ENCODE measurements at regions of chr11 and their contacts with region 1.

Region 1: DNA sequence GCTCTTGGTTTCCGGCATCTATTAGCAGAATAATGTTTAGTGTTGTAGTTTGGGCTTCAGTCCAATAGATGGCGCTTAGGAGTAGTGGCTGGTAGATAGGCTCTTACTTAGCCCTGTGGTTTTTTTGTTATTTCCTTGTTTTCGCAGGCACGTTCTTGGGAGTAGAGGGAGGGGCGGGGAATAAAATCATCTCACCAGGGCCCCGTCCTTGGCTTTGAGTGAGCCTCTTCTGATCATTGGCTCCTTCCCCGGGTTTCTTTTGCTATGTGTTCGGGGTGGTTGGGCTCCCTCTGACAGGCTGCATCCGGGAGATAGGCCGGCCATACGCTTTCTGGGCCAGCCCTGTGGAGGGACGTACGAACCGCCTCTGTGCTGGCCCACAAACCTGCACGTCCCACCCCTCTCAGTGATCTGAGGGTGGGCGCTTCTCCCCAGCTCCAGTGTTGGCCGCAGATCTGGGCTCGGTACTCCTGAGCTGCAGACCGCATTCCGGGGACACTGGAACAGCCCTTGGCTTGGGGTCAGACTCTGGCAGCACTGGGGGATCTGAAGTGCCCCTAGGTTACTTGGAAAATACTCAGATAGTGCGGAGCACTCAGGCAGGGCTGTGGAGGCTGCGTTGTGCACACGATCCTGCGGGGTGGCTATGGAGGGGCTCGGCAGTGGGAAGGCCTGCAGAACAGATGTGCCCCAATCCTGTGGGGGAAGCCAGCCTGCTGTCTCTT is 217.0 kb downstream of the DYNC2H1 start:
- DNase-seq: no peak
- ATAC-seq: peak; percentile 83

Region 2: DNA sequence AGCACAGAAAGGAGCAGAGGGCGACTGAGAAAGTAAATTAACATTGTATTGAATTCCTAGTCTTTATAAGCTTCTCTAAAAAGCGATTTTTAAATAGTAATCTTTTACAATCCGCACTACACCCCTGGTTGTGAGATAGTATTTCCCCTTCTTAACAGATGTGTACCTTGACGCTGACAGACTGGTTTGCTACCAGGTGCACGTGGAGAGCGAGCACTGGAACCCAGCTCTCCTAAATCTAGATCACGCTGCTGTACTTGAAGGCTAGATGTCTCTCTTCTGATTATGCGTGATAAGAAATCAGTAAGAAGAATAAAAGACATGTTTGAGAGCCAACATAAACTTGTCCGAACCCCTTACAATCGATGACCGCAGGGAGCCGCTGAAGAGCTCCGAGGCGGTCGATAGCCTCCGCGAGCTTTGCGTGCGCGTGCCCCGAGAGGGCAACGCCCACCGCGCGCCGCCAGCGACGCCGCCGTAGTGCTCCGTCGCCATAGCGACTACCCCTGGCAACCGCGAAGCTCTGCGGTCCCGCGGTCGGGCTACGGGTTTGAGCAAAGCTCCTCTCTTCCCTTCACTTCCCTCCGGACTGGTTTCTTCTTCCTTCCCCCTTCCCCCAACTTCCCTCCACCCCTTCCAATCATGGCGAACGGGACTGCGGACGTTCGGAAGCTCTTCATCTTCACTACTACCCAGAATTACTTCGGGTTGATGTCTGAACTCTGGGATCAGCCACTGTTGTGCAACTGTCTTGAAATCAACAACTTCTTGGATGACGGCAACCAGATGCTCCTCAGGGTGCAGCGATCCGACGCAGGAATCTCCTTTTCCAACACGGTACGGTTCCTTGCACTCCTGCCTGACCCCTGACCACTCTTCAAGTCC is 217.1 kb before region 1 on chr11 and contains the start of gene DYNC2H1:
- intact Hi-C with region 1: no loop called
- DNase-seq: peak; percentile 94
- ATAC-seq: peak; percentile 100
- total RNA-seq, gene DYNC2H1: 2.9 TPM

Region 3: DNA sequence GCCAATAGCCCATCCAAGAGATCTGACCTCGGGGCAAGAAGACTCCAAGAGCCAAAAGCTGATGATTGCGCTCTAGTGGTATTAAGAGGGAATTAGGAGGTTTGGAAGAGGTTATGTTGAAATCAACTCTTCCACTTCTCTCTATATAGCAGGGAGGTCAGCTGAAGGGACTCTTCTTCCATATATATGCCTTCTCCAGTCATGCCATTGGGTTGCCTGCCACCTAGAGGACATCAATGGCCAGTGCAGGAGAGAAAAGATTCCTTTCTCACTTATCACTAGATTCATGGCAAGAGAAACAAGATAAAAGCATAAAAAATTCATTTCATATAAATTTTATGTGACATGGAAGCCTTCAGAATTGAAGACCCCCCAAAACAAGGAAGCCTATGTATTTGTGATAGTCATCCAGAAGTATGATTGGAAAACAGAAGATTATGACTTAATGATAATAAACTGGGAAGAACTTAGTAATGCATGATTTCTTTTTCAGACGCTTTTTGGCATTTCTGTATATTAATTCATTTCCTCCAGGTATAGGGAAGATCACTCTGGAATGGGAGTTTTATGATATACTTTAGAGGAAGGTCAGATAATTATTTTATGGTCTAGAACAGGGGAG is 275.1 kb after region 1 on chr11:
- intact Hi-C with region 1: loop called (anchors 5 kb)
- DNase-seq: no peak
- ATAC-seq: peak; percentile 83